ENCODE measurements at regions of chr4 and their contacts with region 1.

Region 1: DNA sequence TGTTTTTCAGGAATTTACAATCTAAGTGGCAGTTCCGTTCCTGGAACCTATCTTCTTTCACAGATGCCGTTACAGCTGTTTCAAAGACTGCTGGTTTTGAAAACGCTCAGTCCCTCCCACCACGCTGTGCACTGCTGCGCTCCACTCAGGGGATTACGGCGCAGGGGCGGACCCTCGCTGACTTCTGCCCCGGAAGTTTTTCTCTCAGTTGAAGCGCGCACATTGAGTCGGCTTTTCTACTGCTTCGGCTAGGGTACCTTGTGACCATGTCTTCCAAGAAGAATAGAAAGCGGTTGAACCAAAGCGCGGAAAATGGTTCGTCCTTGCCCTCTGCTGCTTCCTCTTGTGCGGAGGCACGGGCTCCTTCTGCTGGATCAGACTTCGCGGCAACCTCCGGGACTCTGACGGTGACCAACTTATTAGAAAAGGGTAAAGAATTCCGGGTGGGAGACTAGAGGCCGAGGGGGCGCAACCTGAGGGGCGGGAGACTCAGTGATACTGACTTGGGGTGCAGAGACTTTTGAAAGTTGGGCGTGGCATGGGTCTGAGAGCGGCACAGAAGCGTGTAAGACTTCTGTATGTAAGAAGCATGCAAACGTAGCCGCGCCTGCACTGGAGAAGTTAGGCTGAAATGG is 597 bp upstream of the NUDT6 start:
- DNase-seq: peak; percentile 90
- H3K4me3 Mint-ChIP-seq: no peak overlapping the region
- H3K27ac Mint-ChIP-seq: peak overlapping the region; percentile 96
- H3K4me1 Mint-ChIP-seq: peaks cover 16% of the 10 kb centered on the region
- H3K27me3 Mint-ChIP-seq: no peaks in the 10 kb centered on the region

Region 2: GRCh38 chr4:121950212-121950679 is 972.7 kb before region 1 on chr4:
- intact Hi-C with region 1: loop called (anchors 2 kb)
- DNase-seq: peak; percentile 74
- H3K4me3 Mint-ChIP-seq: peak overlapping the region; percentile 89
- H3K27ac Mint-ChIP-seq: peak overlapping the region; percentile 46
- H3K4me1 Mint-ChIP-seq: peaks cover 26% of the 10 kb centered on the region
- H3K27me3 Mint-ChIP-seq: peaks cover 50% of the 10 kb centered on the region

Region 3: GRCh38 chr4:122458625-122459024 is 464.4 kb before region 1 on chr4:
- intact Hi-C with region 1: loop called (anchors 5 kb)
- DNase-seq: peak; percentile 29
- H3K4me3 Mint-ChIP-seq: peak overlapping the region; percentile 76
- H3K27ac Mint-ChIP-seq: peak overlapping the region; percentile 87
- H3K4me1 Mint-ChIP-seq: peaks cover 46% of the 10 kb centered on the region
- H3K27me3 Mint-ChIP-seq: no peaks in the 10 kb centered on the region

Region 4: DNA sequence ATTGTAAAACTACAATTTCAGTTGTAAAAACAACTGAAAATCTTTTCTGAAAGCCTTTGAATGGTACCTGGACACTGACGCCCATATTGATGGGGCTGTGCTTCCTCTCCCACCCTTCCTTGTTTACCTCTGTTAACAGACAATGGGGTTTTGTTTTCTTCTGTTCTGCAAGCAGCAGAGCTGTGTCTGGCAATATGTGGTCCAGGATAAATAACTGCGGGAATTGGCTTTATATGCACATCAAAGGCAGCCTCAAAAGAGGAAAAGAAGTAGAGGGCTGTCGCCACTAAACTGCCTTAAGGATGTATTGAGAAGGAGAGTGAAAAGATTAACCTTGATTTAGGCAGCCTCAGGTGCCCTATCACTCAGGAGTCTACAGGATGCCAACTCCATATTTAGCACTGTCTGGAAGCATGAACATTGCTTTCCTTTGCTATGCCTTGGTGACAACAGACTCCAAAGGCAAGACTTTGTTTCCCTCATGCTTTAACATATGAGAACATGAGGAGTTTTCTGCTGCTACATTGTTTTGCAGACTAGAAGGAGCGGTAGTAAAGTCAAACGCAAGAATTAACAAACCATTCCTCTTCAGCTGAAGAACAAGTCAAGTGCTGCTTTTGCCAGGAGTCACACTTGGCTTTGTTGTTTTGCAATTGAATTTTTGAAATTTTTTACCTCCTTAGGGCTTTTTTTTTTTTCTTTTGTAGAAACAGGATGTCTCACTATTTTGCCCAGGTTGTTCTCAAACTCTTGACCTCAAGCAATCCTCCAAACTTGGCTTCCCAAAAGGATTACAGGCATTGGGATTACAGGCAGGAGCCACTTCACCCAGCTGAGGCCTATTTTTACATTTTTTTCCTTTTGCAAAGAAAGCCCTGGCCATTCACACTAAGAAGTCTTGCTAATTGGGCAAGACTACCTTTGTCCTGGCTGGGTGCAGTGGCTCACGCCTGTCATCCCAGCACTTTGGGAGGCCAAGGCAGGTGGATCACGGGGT is 305.1 kb before region 1 on chr4:
- intact Hi-C with region 1: loop called (anchors 5 kb)
- DNase-seq: no peak
- H3K4me3 Mint-ChIP-seq: peak overlapping the region; percentile 93
- H3K27ac Mint-ChIP-seq: peak overlapping the region; percentile 93
- H3K4me1 Mint-ChIP-seq: peaks cover 67% of the 10 kb centered on the region
- H3K27me3 Mint-ChIP-seq: no peaks in the 10 kb centered on the region

Region 5: DNA sequence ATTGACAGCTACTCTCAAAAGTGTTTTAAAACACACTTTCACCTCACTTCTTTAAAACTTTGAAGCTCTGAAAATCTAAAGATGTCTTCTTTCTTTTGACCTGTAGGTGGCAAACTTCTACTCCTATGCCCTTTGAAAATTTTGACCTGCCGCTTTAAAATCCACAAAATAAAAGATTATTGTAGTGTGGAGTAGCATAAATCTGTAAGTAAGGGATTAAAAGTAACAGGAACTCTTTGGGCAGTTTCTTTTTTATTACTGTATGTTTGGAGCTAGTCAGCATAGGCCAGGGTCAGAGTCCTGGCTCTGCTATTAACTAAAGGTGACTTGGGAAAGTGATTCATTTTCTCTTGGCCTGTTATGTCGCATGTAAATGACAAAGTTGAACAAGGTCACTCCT is 165.0 kb before region 1 on chr4:
- intact Hi-C with region 1: loop called (anchors 1 kb)
- DNase-seq: no peak
- H3K4me3 Mint-ChIP-seq: no peak overlapping the region
- H3K27ac Mint-ChIP-seq: no peak overlapping the region
- H3K4me1 Mint-ChIP-seq: peaks cover 40% of the 10 kb centered on the region
- H3K27me3 Mint-ChIP-seq: peaks cover 19% of the 10 kb centered on the region

Region 6: DNA sequence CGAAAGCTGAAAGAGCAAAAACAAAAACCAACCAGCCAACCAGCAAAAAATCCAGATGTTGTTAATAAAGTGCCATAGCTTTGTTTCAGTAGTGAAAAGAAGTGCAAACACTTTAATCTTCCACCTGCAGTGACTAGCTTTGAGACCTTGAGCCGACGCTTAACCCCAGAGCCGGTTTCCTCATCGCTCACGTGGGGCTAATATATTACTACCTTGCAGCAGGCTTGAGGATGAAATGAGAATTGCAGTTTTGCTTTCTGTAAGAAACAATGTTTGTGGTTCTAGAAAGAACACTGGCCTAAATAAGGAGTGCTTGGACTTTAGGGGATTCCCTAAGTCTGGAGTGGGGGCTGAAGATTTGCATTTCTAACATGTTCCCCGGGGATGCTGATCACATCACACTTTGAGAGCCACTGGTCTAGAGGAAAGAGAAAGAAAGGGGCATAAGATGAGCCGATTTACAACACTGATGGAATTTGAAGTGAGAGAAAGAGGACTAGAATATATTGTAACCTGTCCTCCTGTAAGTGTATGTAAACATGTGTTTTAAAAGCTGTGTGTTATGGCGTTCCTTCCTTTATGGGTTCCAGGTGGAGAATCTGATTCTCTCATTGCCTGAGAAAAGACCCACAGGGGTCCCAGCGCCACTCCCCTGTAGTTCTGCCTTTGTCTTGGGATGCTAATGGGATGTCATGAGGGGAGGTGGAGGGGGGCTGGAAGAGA is 95.0 kb before region 1 on chr4:
- intact Hi-C with region 1: loop called (anchors 1 kb)
- DNase-seq: peak; percentile 40
- H3K4me3 Mint-ChIP-seq: peak overlapping the region; percentile 78
- H3K27ac Mint-ChIP-seq: peak overlapping the region; percentile 64
- H3K4me1 Mint-ChIP-seq: peaks cover 34% of the 10 kb centered on the region
- H3K27me3 Mint-ChIP-seq: peaks cover 39% of the 10 kb centered on the region

Region 7: GRCh38 chr4:122900314-122900713 is 22.7 kb before region 1 on chr4:
- intact Hi-C with region 1: no loop called
- DNase-seq: no peak
- H3K4me3 Mint-ChIP-seq: no peak overlapping the region
- H3K27ac Mint-ChIP-seq: no peak overlapping the region
- H3K4me1 Mint-ChIP-seq: peaks cover 4% of the 10 kb centered on the region
- H3K27me3 Mint-ChIP-seq: no peaks in the 10 kb centered on the region

Region 8: GRCh38 chr4:123671633-123672404 is 748.8 kb after region 1 on chr4:
- intact Hi-C with region 1: loop called (anchors 5 kb)
- DNase-seq: peak; percentile 14
- H3K4me3 Mint-ChIP-seq: no peak overlapping the region
- H3K27ac Mint-ChIP-seq: peak overlapping the region; percentile 7
- H3K4me1 Mint-ChIP-seq: peaks cover 43% of the 10 kb centered on the region
- H3K27me3 Mint-ChIP-seq: peaks cover 46% of the 10 kb centered on the region

Measured in activated T-helper 1 cell treated with anti-CD3 and anti-CD28 coated beads, Interleukin-12 subunit alpha, Interleukin-12 subunit beta, Interleukin-2, Interleukin-4 antibody, amounts not matched to agents 30 ng/mL and 10 ng/mL and 1 ng/mL, durations not matched to agents 14 hours and 24 hours and 36 hours (primary cell).